Activated CD8-positive, alpha-beta memory T cell treated with anti-CD3 and anti-CD28 coated beads, Interleukin-2, amount 10 ng/mL, durations not matched to agents 7 days and 5 days (primary cell): ENCODE measurements at regions of chr12 and their contacts with region 1.

Region 1: DNA sequence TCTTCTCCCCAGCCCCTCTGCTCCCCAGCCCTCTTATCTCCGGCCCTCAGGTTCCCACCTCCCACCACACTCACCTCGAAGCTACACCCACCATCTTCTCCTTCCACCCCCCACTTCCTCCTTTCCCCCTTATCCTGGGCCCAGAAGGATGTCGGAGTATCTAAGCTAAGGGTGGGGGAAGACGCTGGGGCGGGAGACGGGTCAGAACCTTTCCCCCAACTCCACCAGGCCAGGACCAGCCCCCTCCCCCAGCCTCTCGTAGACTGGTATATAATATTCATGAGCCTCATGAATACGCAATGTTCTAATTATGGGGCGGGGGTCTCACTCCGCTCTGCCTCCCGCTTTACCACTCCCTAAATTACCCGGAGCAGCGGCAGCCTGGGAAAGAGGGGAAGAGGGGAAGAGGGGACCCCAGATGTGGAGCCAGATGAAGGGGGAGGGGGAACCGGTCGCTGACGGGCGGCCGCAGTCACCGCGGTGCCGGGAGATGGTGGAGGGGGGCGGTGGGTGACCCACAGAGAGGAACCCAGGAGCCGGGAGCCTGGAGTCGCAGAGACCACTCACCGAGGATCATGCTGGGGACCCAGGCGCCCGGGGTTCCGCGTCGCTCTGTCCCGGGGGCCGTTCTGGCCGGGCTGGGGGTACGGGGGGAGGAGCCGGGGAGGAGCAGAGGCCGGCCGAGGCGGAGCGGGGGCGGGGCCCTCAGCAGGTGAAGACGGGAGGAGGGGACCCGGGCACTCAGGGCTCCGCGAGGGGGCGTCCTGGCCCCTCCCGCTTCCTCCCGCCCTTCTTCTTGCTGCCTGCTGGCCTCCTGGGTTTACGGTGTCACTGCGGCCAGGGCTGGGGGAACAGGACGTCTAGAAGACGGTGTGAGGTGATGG is 6.4 kb upstream of the ZNF385A start:
- DNase-seq: peak; percentile 72
- ATAC-seq: peak; percentile 84
- H3K4me3 Mint-ChIP-seq: peak overlapping the region; percentile 50
- H3K27ac Mint-ChIP-seq: no peak overlapping the region
- H3K4me1 Mint-ChIP-seq: peaks cover 20% of the 10 kb centered on the region
- H3K27me3 Mint-ChIP-seq: no peaks in the 10 kb centered on the region

Region 2: DNA sequence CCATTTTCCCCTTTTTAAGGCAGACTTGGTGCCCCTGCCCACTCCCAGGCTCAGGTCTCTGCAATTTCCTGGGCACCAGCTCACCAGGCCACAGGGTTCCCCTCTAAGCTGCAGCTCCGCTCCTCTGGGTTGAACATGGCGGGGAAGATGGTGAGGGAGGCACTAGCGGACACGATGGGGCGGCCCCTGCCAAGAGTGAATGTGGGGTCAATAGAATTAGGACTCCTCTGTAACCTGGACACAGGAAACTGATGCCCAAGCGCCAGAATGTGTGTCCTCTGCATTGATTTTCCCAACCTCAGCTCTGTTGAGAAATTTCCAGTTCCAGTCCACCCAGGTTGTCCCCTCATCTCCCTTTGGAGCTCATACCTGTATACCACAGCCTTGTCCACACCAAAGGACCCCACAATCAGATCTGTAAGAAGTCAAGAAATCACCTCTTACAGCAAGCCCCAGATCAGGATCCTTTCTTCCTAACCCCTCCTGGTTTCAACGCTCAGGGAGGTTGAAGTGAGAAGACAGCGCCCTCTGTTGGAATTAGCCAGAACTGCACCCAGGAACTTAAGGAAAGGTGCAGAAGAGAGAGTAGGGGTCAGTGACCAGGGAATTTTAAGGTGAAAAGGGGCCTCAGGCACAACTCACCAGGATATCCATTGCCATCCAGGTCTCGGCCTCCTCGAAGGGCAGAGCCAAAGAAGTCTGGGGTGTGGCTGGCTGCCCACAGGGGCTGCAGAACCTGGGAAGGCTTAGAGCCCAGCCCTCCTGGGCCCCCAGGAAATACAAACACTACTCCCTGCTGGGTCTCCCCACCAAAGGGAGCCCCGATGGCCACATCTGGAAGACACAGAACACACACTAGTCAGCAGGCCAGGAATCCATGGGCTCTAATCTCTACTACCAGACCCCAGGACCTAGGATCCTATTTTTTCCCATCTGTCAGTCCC is 13.4 kb after region 1 on chr12:
- CTCF ChIA-PET with region 1: interaction called, 283 read pairs
- DNase-seq: peak; percentile 73
- ATAC-seq: no peak
- H3K4me3 Mint-ChIP-seq: no peak overlapping the region
- H3K27ac Mint-ChIP-seq: peak overlapping the region; percentile 58
- H3K4me1 Mint-ChIP-seq: peaks cover 7% of the 10 kb centered on the region
- H3K27me3 Mint-ChIP-seq: no peaks in the 10 kb centered on the region